ENCODE measurements at regions of chr7 and their contacts with region 1.

Region 1: DNA sequence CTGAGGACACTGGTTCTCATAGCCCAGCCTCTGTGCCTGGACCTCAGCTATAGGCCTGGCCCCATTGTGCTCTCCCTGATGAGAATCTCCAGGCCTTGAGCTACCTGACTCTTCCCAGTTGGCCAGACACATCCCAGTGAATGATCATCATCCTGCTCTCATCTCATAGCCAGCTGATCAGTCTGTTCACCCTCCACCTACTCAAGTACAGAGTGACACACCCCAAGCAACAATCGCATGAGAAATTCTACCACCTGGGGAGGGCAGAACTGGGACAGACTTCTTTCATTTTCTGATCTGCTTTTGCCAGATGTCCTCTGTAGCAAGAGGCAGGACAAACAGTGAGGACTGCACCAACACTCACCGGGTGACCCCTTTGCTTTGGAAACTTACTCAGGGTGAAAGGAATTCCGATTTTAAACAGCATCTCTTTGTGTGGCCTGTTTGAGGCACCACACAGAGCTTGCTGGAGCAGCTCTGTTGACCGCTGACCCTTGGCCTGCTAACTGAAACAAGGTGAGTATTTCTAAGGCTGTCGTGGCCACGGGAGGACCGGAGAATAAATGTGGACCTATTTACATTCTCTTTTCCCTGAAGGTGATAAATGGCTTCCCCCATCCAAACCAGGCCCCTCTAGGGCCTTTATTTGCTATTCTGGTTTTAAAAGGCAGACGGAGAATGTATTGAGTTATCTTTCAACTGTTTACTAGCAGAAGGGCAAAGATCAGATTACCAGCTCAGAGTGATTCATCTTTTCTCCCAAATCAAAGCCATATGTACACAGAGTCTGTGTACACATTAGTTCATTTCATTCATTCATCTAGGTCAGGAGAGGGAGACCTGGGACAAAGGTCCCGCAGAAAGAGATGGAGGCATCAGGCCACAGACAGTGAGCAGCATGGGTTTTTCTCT is 181.4 kb upstream of the TNS3 start:
- DNase-seq: peak; percentile 78
- H3K4me3 Mint-ChIP-seq: peak overlapping the region; percentile 15
- H3K27ac Mint-ChIP-seq: peak overlapping the region; percentile 86
- H3K4me1 Mint-ChIP-seq: peaks cover 54% of the 10 kb centered on the region
- H3K27me3 Mint-ChIP-seq: no peaks in the 10 kb centered on the region
- CTCF ChIP-seq: no peak

Region 2: GRCh38 chr7:47351233-47352154 is 411.8 kb before region 1 on chr7:
- CTCF ChIA-PET with region 1: no interaction called
- intact Hi-C with region 1: no loop called
- DNase-seq: no peak
- H3K4me3 Mint-ChIP-seq: no peak overlapping the region
- H3K27ac Mint-ChIP-seq: no peak overlapping the region
- H3K4me1 Mint-ChIP-seq: no peaks in the 10 kb centered on the region
- H3K27me3 Mint-ChIP-seq: no peaks in the 10 kb centered on the region
- CTCF ChIP-seq: no peak

Region 3: DNA sequence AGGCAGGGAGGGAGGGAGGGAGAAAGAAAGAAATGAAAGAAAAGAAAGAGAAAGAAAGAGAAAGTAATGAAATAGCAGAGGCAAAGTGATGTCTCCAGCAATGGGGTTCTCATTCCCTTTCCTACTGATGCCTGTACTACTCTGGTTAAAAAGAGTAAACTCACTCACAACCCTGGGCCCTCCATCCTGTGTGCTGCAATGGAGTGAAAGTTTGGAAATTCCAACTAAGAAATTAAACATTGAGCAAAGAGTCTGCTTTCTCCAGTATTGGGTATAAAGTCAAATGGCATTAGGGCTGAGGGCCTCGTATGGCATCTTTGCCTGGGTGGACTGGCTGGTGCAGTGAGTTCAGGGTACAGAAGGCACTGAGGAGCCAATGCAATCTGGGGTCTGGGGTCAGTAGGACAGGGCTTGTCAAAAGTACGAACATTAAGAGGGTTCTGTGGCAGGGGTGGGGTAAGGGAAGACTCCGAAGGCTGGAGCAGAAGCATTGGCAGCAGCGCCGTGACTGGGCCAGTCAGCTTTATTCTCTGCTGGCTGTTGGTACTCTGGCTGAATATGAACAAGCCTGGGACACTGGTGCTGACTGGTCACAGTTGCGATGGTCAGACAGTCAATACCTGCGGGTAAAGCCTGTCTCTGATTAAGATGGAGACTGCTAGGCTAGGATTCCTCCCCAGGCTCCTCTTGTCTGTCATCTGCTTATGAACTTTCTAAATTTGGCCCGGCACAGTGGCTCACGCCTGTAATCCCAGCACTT is 157.3 kb before region 1 on chr7:
- CTCF ChIA-PET with region 1: no interaction called
- intact Hi-C with region 1: loop called (anchors 1 kb)
- DNase-seq: no peak
- H3K4me3 Mint-ChIP-seq: no peak overlapping the region
- H3K27ac Mint-ChIP-seq: peak overlapping the region; percentile 88
- H3K4me1 Mint-ChIP-seq: peaks cover 67% of the 10 kb centered on the region
- H3K27me3 Mint-ChIP-seq: no peaks in the 10 kb centered on the region
- CTCF ChIP-seq: no peak

Measured in Calu3 (cell line).